ENCODE measurements at regions of chr19 and their contacts with region 1.

Region 1: DNA sequence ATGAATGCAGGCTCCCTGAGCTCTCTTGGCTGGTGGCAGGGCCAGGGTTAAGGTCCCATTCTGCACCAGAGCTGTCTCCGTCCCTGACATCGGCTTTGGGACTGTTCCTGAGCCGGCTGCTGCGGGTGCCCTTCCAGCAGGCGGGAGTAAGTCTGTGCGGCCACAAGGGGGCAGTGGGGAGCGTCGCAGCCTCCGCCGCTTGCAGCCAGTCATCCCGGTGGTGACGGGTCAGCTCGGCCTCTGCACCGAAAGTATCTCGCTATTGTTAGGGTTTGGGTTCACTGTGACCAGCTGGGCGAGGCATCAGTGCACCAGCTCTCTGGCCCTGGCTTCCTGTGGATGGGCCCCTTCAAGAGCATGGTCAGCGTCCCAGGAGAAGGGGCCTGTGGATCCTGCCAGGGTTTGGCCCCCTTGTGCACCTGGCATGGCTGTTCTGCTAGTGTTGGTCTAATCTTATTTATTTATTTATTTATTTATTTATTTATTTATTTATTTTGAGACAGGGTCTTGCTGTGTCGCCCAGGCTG is 15.1 kb downstream of the NDUFB7 start:
- H3K4me3 ChIP-seq: no peak overlapping the region; the same call in 1 of the 2 replicates
- H3K27ac ChIP-seq: no peak overlapping the region
- H3K4me1 ChIP-seq: no peaks in the 10 kb centered on the region
- CTCF ChIP-seq: peak; percentile 93

Region 2: GRCh38 chr19:14505488-14506432 is 51.0 kb before region 1 on chr19:
- CTCF ChIA-PET with region 1: interaction called, 37 read pairs
- POLR2A ChIA-PET with region 1: no interaction called
- H3K4me3 ChIP-seq: no peak overlapping the region
- H3K27ac ChIP-seq: peak overlapping the region; percentile 53
- H3K4me1 ChIP-seq: no peaks in the 10 kb centered on the region; the same call in 1 of the 2 replicates
- CTCF ChIP-seq: peak; percentile 75

Region 3: GRCh38 chr19:14542711-14543328 is 13.9 kb before region 1 on chr19:
- CTCF ChIA-PET with region 1: interaction called, 17 read pairs
- POLR2A ChIA-PET with region 1: interaction called, 6 read pairs
- H3K4me3 ChIP-seq: no peak overlapping the region
- H3K27ac ChIP-seq: no peak overlapping the region
- H3K4me1 ChIP-seq: peaks cover 2% of the 10 kb centered on the region; the same call in 1 of the 2 replicates
- CTCF ChIP-seq: no peak

Region 4: GRCh38 chr19:14571695-14572490 is 15.2 kb after region 1 on chr19 and contains the start of gene NDUFB7:
- CTCF ChIA-PET with region 1: interaction called, 23 read pairs
- POLR2A ChIA-PET with region 1: interaction called, 4 read pairs
- H3K4me3 ChIP-seq: peak within 1 kb of the TSS; percentile 72
- H3K27ac ChIP-seq: peak within 1 kb of the TSS; percentile 57; the same call in 1 of the 2 replicates
- H3K4me1 ChIP-seq: peaks cover 4% of the 10 kb centered on the region; the same call in 1 of the 2 replicates
- CTCF ChIP-seq: peak; percentile 97

Region 5: DNA sequence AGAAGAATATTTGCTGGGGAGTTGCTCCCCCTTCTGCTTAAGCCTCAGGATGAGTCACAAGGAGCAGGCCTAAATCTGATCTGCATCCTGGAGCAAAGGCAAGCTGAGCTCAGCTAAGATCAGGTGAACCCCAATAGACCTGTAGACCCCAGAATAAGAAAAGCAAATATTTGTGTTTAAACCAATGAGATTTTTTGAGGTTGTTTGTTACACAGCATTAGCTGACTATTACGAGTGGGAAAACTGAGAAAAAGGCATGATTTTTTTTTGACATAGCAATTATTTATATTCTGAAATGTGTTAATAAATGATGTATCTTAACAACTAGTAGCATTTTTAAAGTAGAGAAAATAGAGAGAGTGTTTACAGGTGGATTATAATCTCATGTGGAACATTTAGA is 72.8 kb after region 1 on chr19:
- CTCF ChIA-PET with region 1: no interaction called
- POLR2A ChIA-PET with region 1: no interaction called
- H3K4me3 ChIP-seq: no peak overlapping the region
- H3K27ac ChIP-seq: no peak overlapping the region
- H3K4me1 ChIP-seq: no peaks in the 10 kb centered on the region
- CTCF ChIP-seq: no peak